ENCODE measurements at regions of chr9 and their contacts with region 1.

Region 1: GRCh38 chr9:95425910-95426551 is 90.7 kb downstream of the PTCH1 start:
- DNase-seq: peak; percentile 64 to 73
- H3K4me3 ChIP-seq: peak overlapping the region; percentile 48
- H3K4me3 Mint-ChIP-seq: peak overlapping the region; percentile 92
- H3K27ac Mint-ChIP-seq: peak overlapping the region; percentile 85
- H3K4me1 ChIP-seq: no peaks in the 10 kb centered on the region
- H3K4me1 Mint-ChIP-seq: peaks cover 7% of the 10 kb centered on the region
- H3K27me3 ChIP-seq: no peaks in the 10 kb centered on the region
- H3K27me3 Mint-ChIP-seq: no peaks in the 10 kb centered on the region
- CTCF ChIP-seq: no peak

Region 2: DNA sequence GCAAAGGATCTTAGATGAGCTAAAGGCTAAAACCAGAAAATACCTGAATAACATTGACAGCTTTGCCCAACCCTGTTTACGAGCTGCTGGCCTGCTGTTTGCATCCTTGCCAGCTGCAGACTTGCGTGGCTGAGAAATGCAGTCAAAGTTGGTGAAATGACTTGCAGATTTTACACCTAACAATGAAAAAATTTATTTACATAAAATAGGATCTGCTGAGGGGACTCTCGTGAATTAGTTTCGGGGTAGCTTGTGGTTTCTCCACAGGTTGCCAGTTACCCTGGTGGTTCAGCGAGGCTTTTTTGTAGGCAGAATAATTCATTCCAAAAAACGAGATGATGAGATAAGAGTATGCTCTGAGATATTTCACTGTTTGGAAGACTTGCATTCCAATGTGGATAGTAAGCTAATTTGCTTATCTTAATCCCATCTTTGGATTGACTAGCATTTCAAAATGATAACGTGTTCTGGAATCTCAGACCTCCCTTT is 42.8 kb before region 1 on chr9:
- CTCF ChIA-PET with region 1: no interaction called
- POLR2A ChIA-PET with region 1: no interaction called
- intact Hi-C with region 1: loop called (anchors 2 kb)
- DNase-seq: peak in 1 of 2 experiments; percentile 50
- H3K4me3 ChIP-seq: no peak overlapping the region
- H3K4me3 Mint-ChIP-seq: no peak overlapping the region
- H3K27ac Mint-ChIP-seq: peak overlapping the region; percentile 56
- H3K4me1 ChIP-seq: peaks cover 30% of the 10 kb centered on the region
- H3K4me1 Mint-ChIP-seq: peaks cover 32% of the 10 kb centered on the region
- H3K27me3 ChIP-seq: no peaks in the 10 kb centered on the region
- H3K27me3 Mint-ChIP-seq: no peaks in the 10 kb centered on the region
- CTCF ChIP-seq: no peak

Region 3: DNA sequence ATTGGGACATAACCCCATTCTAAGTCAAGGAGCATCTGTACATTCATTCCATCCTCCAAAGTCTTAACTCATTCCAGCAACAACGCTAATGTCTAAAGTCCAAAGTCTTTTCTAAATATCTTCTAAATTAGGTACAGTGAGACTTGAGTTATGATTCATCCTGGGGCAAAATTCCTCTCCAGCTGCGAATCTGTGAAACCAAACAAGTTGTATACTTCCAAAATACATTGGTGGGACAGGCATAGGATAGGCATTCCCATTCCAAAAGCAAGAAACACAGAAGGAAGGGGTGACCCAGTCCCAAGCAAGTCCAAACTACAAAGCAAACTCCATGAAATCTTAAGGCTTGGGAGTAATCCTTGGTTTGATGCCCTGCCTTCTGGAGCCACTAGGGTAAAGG is 10.9 kb before region 1 on chr9:
- CTCF ChIA-PET with region 1: no interaction called
- POLR2A ChIA-PET with region 1: no interaction called
- intact Hi-C with region 1: no loop called
- DNase-seq: no peak
- H3K4me3 ChIP-seq: no peak overlapping the region
- H3K4me3 Mint-ChIP-seq: no peak overlapping the region
- H3K27ac Mint-ChIP-seq: no peak overlapping the region
- H3K4me1 ChIP-seq: peaks cover 30% of the 10 kb centered on the region
- H3K4me1 Mint-ChIP-seq: peaks cover 30% of the 10 kb centered on the region
- H3K27me3 ChIP-seq: no peaks in the 10 kb centered on the region
- H3K27me3 Mint-ChIP-seq: no peaks in the 10 kb centered on the region
- CTCF ChIP-seq: no peak

Region 4: DNA sequence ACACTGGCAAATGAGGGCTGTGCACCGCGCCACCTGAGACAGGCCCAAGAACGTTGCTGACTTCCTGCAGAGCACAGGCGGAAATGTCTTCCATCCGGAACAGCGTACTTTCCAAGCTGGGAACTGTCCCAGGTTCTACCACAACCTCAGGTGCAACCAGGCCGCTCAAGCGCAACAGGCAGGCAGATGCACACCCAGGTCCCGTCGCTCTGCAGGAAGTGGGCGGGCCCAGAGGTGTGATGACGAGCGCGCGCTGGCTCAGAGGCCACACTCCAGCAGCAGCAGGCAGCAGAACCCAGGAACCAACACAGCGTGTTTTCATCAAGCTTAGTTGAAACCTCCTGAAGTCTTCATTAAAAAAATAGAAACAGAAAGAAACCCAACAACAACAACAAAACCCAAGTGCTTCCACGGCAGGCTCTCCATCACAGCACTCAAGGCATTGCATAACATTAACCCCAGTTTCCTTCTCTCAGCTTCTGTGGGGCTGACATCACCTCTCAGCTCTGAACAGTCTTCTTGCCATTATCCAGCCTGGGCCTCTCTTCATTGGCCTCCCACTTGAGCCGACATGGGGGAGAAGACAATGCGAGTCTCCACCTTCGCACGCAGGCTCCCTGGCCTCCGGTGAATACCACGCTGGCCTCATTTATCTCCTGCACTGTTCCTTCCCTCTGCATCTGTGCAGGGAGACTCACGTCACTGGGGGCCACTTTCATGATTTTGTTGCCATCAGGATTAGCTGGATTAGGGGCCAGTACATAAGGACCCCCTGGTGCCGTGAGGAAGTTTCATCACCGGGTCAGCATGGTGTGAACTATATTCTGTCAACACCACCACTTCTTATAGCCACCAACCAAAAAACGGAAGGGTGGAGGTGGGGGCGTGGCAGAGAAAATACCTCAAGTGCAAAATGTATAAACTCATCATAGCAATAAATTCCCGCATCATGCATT is 68.7 kb after region 1 on chr9:
- CTCF ChIA-PET with region 1: no interaction called
- POLR2A ChIA-PET with region 1: no interaction called
- intact Hi-C with region 1: loop called (anchors 5 kb)
- DNase-seq: peak; percentile 79 to 81
- H3K4me3 ChIP-seq: peak overlapping the region; percentile 46
- H3K4me3 Mint-ChIP-seq: peak overlapping the region; percentile 82
- H3K27ac Mint-ChIP-seq: peak overlapping the region; percentile 66
- H3K4me1 ChIP-seq: peaks cover 3% of the 10 kb centered on the region; the same call in 1 of the 2 replicates
- H3K4me1 Mint-ChIP-seq: peaks cover 7% of the 10 kb centered on the region
- H3K27me3 ChIP-seq: no peaks in the 10 kb centered on the region
- H3K27me3 Mint-ChIP-seq: no peaks in the 10 kb centered on the region
- CTCF ChIP-seq: no peak

Region 5: GRCh38 chr9:95510709-95511615 is 84.9 kb after region 1 on chr9:
- CTCF ChIA-PET with region 1: no interaction called
- POLR2A ChIA-PET with region 1: no interaction called
- intact Hi-C with region 1: loop called (anchors 2 kb)
- DNase-seq: peak; percentile 96 to 97
- H3K4me3 ChIP-seq: peak overlapping the region; percentile 94
- H3K4me3 Mint-ChIP-seq: peak overlapping the region; percentile 93
- H3K27ac Mint-ChIP-seq: peak overlapping the region; percentile 87
- H3K4me1 ChIP-seq: peaks cover 11% of the 10 kb centered on the region; the same call in 1 of the 2 replicates
- H3K4me1 Mint-ChIP-seq: no peaks in the 10 kb centered on the region
- H3K27me3 ChIP-seq: no peaks in the 10 kb centered on the region
- H3K27me3 Mint-ChIP-seq: no peaks in the 10 kb centered on the region
- CTCF ChIP-seq: no peak

Region 6: DNA sequence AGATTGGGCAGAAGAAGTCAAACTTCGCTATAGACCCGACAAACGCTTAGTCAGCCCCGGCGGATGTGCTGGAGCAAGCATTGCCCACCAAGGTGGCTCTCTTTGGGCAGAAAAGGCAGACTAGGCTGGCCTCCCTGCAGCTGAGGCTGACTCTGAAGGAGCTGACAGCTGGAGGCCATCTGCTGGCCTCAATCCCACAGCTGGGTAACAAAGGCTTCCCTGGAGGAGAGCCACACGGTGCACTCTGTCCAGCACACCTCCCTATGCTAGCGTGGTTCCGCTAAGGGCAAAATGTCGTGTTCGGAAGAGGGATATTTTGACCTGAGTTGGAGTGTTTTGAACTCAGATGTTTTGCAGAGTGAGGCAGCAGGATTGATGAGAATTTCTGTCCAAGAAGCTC is 194.3 kb after region 1 on chr9:
- CTCF ChIA-PET with region 1: no interaction called
- POLR2A ChIA-PET with region 1: no interaction called
- intact Hi-C with region 1: no loop called
- DNase-seq: no peak
- H3K4me3 ChIP-seq: no peak overlapping the region
- H3K4me3 Mint-ChIP-seq: no peak overlapping the region
- H3K27ac Mint-ChIP-seq: no peak overlapping the region
- H3K4me1 ChIP-seq: no peaks in the 10 kb centered on the region
- H3K4me1 Mint-ChIP-seq: no peaks in the 10 kb centered on the region
- H3K27me3 ChIP-seq: no peaks in the 10 kb centered on the region
- H3K27me3 Mint-ChIP-seq: peaks cover 3% of the 10 kb centered on the region
- CTCF ChIP-seq: no peak